Dorsolateral prefrontal cortex (tissue), 120 donors: ENCODE measurements at regions of chr16 and their contacts with region 1.

Region 1: DNA sequence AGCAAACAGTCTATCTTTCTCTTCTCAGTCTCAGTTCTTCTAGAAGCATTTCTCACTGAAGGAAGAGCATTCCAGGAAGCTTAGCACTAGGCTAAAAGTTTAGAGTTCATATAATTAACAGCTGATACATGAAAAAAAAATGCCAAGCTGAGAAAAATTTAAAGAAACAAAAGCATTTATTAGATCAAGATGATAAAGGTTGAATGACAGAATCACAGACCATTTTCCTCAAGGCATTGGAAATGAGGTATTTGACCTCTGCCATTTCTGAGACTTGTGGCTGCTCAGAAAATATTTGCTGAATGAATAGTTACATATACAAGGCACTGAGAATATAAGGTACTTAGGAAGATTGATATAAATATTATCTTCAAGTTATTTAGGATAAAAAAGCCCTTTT is 901.6 kb upstream of the GOT2 start:
- DNase-seq: no peak
- H3K4me3 ChIP-seq: no peak overlapping the region
- H3K27ac ChIP-seq: no peak overlapping the region
- H3K27me3 ChIP-seq: no peaks in the 10 kb centered on the region
- CTCF ChIP-seq: no peak

Region 2: DNA sequence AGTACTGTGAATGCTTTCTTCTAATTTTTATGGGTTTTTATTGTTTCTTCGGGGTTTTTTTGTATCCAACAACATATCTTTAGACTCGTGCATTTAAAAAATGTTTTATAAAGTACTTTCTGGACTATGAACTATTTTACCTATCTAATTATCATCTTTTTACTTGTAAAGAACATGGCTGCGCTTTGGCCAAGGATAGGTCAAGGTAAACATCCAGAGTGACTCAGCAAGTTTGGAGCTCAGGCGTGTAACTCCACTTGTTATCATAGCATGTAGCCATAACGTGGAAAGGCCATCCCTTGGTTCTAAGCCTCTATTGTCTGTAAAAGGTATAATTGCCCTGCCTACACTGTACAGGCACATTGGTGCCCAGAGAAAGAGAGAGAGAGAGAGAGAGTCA is 83.5 kb before region 1 on chr16:
- intact Hi-C with region 1: no loop called
- DNase-seq: no peak
- H3K4me3 ChIP-seq: no peak overlapping the region
- H3K27ac ChIP-seq: no peak overlapping the region
- H3K27me3 ChIP-seq: peaks cover 0 to 10% (median 0%) of the 10 kb centered on the region in 45 donors
- CTCF ChIP-seq: no peak

Region 3: DNA sequence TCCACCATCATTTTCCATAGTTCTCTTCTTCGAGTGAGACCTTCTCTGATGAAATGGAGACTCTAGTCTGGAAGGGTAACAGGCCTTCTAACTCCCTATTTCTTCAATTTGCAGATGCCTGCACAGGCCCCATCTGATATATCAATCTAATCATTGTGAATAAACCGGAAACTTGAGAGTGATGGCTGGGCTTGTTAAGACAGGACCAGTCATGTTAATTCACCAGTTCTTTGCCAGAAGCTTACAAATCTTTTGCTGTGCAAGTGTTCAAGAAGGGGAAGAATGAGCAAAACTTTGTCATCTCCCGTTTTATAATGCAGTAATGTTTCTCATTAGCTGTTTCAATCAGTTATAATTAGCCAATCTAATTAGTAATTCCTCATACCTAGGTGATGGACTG is 659.8 kb after region 1 on chr16:
- intact Hi-C with region 1: loop called in 1 of 2 experiments (anchors 5 kb)
- DNase-seq: no peak
- H3K4me3 ChIP-seq: no peak overlapping the region
- H3K27ac ChIP-seq: no peak overlapping the region
- H3K27me3 ChIP-seq: no peaks in the 10 kb centered on the region
- CTCF ChIP-seq: no peak